ENCODE measurements at regions of chr5 and their contacts with region 1.

Region 1: DNA sequence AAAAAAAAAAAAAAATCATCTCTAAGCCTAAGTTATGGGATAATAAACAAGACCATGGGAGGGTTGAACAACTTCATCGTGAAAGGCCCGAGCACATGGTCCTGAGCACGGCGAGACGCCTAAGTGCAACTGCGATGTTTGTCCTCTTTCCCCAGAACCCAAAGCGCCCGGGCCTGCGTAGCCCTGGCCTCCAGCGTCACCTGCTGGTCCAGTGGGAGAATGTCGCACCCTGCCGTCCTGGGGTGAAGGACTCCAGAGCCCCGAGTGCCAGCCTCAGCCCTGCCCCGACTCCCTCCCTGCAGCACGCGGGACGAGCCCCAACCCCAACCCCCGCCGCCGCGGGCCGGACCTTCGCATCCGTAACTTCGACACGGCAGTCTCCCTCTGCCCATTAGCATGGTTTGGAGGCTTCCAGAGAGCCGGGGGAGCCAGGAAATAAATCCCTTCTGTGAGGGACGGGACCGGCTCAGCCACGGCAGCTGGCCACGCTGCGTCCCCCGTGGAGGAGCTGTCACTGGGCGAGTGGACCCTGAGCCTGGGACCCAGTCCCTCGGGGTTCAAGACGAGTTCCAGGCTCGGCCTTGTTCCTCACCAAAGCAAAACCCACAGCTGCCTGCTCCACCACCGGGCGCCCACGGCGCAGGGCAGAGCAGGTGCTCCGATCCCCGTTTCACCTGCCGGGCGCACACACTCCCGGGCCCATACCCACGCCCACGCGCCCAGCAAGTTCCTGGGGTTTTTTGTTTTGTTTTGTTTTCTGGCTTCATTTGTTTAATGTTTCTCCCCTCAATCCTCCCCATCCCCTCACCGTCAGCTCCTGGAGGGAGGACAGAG is 132.5 kb upstream of the HAND1 start:
- DNase-seq: peak; percentile 56 to 78
- ATAC-seq: peak; percentile 98

Region 2: DNA sequence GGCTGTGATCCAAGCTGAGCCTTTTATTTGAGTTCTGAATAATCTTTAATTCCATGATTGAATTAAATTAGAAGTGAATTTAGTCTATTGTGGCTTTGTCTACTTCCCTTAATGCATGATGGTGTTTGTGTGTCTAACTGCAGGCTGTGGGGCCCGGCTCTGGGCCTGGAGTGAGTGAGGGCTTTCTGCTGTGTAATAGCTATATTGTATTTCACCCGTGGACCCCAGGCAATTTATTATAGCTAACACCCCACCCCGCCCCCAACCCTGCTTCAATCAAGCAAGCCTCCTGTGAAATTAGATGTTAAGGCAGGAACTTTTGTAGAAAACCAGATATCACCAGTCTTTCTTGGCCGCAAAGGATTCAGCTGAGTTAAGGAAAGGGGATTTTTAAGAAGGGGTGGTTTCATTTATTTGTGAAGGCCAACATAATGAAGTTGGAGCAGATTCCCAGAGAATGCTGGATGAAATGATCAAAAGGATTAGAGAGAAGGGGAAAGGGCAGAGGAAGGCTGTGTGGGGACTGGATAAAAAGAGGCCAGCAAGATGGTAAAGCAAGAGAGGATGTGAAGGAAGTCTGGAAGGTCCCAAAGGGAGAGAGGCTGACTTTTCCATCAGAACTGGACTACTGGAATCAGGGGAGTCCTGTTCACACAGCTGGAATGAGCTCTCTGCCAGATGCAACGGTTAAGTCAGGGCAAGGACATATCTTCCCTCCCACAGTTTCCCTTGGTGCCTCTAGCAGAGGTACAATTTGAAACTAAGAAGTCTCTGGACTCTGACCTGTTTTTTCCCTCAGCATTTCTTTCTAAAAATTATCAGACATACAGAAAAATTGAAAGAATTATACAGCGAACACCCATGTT is 290.1 kb before region 1 on chr5:
- intact Hi-C with region 1: no loop called
- DNase-seq: no peak
- ATAC-seq: no peak

Region 3: DNA sequence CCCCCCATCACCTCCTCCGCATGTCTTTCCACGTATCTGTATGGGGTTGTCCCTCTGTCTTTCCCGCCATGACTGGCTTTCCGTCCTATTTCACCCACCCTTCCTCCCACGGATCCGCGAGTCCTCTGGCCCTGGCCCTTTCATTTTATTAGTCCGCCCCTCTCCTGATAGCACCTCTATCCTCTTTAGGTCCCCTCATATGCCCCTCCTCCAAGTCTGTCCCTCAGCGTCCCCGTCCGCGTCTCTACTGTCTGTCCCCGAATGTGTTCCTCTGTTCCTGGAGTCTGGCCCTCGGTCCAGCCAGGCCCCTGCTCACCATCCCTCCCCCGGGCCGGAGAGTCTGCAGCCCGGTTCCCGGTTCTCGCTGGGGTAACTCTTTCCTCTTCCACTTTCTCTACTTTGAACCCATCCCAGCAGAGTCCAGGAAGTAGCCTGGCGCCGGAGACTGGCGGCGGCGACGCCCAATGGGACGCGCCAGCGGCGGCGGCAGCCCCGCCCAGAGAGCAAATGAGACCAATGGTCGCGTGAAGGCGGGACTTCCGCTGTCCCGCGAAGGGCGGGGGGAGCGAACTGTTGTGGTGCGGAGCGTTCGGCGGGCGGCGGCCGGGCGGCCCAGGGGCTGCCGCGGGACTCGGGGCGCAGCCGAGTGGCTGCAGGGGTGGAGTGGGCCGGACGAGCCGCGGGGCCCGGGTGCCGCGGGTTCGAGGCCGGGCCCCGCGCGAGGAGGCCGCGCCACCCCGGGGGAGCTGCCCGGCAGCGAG is 164.9 kb before region 1 on chr5 and contains the start of gene SAP30L:
- intact Hi-C with region 1: no loop called
- DNase-seq: peak; percentile 93 to 96
- ATAC-seq: peak; percentile 95
- total RNA-seq, gene SAP30L: 42.6 to 48.9 TPM

Region 4: GRCh38 chr5:154467655-154468354 is 142.7 kb before region 1 on chr5:
- intact Hi-C with region 1: loop called in 1 of 2 experiments (anchors 2 kb)
- DNase-seq: peak in 1 of 2 donors; percentile 86
- ATAC-seq: peak; percentile 94